Calu3 (cell line): ENCODE measurements at regions of chr22 and their contacts with region 1.

Region 1: DNA sequence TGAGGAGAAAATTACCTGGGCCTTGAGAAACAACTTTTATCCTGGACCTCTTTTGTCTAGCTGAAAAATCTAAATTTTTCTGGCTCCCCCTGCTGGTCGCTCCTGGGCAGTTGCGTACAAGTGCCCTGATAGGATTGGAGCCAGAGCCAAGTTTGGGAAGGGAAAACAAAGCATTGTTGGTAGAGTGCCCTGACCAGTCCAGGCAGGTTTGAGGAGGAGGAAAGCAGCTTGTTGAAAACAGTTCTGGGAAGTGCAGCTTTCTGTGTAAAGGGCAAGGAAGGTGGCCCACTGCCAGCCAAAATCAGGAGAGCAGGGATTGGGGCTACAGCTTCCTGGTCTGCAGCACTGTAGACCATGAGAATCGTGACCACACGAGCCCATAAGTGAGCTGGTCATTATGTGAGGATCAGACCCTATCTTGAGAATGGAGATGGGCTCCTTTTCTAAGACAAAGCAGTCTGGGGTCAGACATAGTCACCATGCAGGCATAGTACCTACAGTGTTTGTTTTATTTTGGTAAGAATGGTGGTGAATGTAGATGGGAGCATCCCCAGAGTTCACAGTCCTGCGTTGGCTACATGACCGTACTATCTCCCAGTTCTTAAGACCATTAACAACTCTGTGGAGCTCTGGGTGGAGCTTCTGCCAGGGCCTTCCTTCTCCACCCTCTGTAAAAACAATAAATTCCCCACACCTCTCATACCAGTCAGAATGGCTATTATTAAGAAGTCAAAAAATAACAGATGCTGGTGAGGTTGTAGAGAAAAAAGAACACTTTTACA is 21.3 kb upstream of the PIK3IP1 start:
- DNase-seq: peak; percentile 86
- H3K4me3 Mint-ChIP-seq: peak overlapping the region; percentile 19
- H3K27ac Mint-ChIP-seq: peak overlapping the region; percentile 36
- H3K4me1 Mint-ChIP-seq: peaks cover 10% of the 10 kb centered on the region
- H3K27me3 Mint-ChIP-seq: no peaks in the 10 kb centered on the region
- CTCF ChIP-seq: peak; percentile 91

Region 2: GRCh38 chr22:31290494-31291471 is 22.8 kb before region 1 on chr22:
- CTCF ChIA-PET with region 1: interaction called, 33 read pairs
- intact Hi-C with region 1: no loop called
- DNase-seq: peak; percentile 93
- H3K4me3 Mint-ChIP-seq: peak overlapping the region; percentile 68
- H3K27ac Mint-ChIP-seq: peak overlapping the region; percentile 55
- H3K4me1 Mint-ChIP-seq: peaks cover 20% of the 10 kb centered on the region
- H3K27me3 Mint-ChIP-seq: no peaks in the 10 kb centered on the region
- CTCF ChIP-seq: no peak

Region 3: GRCh38 chr22:31327883-31328696 is 14.5 kb after region 1 on chr22:
- CTCF ChIA-PET with region 1: interaction called, 12 read pairs
- intact Hi-C with region 1: no loop called
- DNase-seq: no peak
- H3K4me3 Mint-ChIP-seq: no peak overlapping the region
- H3K27ac Mint-ChIP-seq: no peak overlapping the region
- H3K4me1 Mint-ChIP-seq: no peaks in the 10 kb centered on the region
- H3K27me3 Mint-ChIP-seq: no peaks in the 10 kb centered on the region
- CTCF ChIP-seq: no peak